CD8-positive, alpha-beta T cell (primary cell): ENCODE measurements at regions of chr14 and their contacts with region 1.

Region 1: DNA sequence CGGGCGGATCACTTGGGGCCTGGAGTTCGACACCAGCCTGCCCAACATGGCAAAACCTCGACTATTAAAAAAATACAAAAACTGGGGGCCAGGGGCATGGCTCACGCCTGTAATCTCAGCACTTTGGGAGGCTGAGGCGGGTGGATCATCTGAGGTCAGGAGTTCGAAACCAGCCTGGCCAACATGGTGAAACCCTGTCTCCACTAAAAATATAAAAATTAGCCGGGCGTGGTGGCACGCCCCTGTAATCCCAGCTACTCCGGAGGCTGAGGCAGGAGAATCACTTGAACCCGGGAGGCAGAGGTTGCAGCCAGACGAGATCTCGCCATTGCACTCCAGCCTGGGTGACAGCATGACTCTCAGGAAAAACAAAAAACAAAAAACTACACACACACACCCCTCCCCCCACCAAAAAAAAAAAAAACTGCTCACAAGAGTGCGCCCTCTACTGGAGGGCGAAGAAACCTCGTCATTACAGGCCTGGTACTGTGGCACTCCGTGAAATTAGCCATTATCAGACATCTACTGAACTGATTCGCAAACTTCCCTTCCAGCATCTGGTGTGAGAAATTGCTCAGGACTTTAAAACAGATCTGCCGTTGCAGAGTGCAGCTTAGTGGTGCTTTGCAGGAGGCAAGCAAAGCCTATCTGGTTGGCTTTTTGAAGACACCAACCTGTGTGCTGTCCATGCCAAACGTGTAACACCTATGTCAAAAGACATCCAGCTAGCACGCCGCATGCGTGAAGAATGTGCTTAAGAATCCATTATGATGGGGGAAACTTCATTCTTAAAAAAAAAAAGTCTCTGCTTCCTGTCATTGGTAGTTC is 7.7 kb downstream of the PPP1R3E start:
- DNase-seq: peak in 8 of 9 experiments; percentile 37 to 86 (median 60)
- ATAC-seq: peak; percentile 90
- H3K4me3 ChIP-seq: no peak overlapping the region
- H3K4me3 Mint-ChIP-seq: peak overlapping the region; percentile 47
- H3K27ac ChIP-seq: no peak overlapping the region
- H3K27ac Mint-ChIP-seq: peak overlapping the region; percentile 45
- H3K4me1 ChIP-seq: peaks cover 14% of the 10 kb centered on the region
- H3K4me1 Mint-ChIP-seq: peaks cover 22% of the 10 kb centered on the region
- H3K27me3 ChIP-seq: no peaks in the 10 kb centered on the region
- H3K27me3 Mint-ChIP-seq: no peaks in the 10 kb centered on the region
- CTCF ChIP-seq: peak; percentile 82

Region 2: DNA sequence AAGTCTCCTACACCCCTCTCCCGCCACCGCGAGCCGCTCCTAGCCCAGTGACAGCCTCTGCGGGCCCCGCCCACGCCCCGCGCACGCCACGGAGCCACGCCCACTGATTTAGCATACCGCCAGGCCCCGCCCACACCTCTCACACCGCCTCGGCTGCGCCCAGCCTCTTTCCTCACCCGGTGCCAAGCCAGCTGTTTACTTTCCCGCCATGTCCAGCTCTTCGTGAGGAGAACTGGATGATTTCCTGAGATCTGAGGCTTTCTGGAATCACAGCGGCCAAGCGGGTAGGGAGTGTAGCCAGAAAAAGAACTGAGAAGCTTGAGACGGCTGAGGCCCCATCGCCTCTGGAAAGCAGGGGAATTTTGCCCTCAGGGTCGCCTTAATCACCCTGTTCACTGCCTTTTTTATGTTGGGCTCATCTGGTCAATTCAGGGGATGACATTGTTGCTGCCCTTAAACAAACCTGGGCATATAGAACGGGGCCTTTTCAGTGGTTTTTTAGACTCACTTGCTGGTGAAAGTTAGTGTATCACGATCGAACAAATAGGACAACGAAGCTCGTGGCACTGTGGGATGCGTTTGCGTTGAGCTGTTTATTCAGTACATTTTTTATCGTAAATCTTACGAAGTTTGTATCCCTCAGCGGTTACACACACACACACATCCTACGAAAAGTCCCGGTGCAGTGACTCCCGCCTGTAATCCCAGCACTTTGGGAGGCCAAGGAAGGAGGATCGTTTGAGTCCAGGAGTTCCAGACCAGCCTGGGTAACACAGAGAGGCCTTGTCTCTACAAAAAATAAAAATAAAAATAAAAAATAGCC is 57.0 kb before region 1 on chr14 and contains the start of gene RNF212B:
- CTCF ChIA-PET with region 1: no interaction called
- POLR2A ChIA-PET with region 1: no interaction called
- intact Hi-C with region 1: no loop called
- DNase-seq: peak; percentile 48 to 79 (median 76)
- ATAC-seq: peak; percentile 100
- H3K4me3 ChIP-seq: peak within 1 kb of the TSS in 1 of 2 experiments; percentile 9
- H3K4me3 Mint-ChIP-seq: peak within 1 kb of the TSS; percentile 57
- H3K27ac ChIP-seq: no peak within 1 kb of the TSS
- H3K27ac Mint-ChIP-seq: no peak within 1 kb of the TSS
- H3K4me1 ChIP-seq: peaks cover 7% of the 10 kb centered on the region
- H3K4me1 Mint-ChIP-seq: peaks cover 8% of the 10 kb centered on the region
- H3K27me3 ChIP-seq: peaks cover 6 to 7% of the 10 kb centered on the region in 2 experiments
- H3K27me3 Mint-ChIP-seq: peaks cover 34% of the 10 kb centered on the region
- CTCF ChIP-seq: no peak
- total RNA-seq, gene RNF212B: not detected

Region 3: GRCh38 chr14:23269193-23269592 is 25.8 kb before region 1 on chr14:
- CTCF ChIA-PET with region 1: interaction called, 6 read pairs
- POLR2A ChIA-PET with region 1: no interaction called
- intact Hi-C with region 1: loop called (anchors 1 kb)
- DNase-seq: no peak
- ATAC-seq: no peak
- H3K4me3 ChIP-seq: no peak overlapping the region
- H3K4me3 Mint-ChIP-seq: no peak overlapping the region
- H3K27ac ChIP-seq: no peak overlapping the region
- H3K27ac Mint-ChIP-seq: no peak overlapping the region
- H3K4me1 ChIP-seq: no peaks in the 10 kb centered on the region
- H3K4me1 Mint-ChIP-seq: no peaks in the 10 kb centered on the region
- H3K27me3 ChIP-seq: peaks cover 0 to 2% of the 10 kb centered on the region in 2 experiments
- H3K27me3 Mint-ChIP-seq: peaks cover 2% of the 10 kb centered on the region
- CTCF ChIP-seq: no peak

Region 4: GRCh38 chr14:23275412-23275811 is 19.5 kb before region 1 on chr14:
- CTCF ChIA-PET with region 1: interaction called, 26 read pairs
- POLR2A ChIA-PET with region 1: interaction called, 10 read pairs
- intact Hi-C with region 1: no loop called
- DNase-seq: no peak
- ATAC-seq: no peak
- H3K4me3 ChIP-seq: no peak overlapping the region
- H3K4me3 Mint-ChIP-seq: no peak overlapping the region
- H3K27ac ChIP-seq: no peak overlapping the region
- H3K27ac Mint-ChIP-seq: no peak overlapping the region
- H3K4me1 ChIP-seq: no peaks in the 10 kb centered on the region
- H3K4me1 Mint-ChIP-seq: peaks cover 2% of the 10 kb centered on the region
- H3K27me3 ChIP-seq: no peaks in the 10 kb centered on the region
- H3K27me3 Mint-ChIP-seq: no peaks in the 10 kb centered on the region
- CTCF ChIP-seq: no peak

Region 5: DNA sequence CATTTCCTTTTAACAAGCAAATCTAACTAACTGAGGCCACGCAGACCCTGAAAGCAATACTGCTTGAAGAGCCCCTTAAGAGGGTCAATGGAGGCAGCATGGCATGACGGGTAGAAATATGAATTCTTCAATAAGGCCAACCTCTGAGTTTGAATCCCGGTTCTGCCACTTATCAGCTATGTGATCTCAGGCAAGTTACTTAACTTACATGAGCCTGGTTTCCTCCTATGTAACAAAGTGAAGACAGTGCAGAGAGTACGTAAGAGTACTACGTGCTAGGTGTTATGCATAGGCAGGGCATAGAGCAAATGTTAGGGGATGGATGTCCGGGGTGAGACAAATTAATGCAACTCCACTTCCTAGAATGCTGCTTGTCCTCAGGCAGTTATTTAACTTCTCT is 13.7 kb before region 1 on chr14:
- CTCF ChIA-PET with region 1: interaction called, 26 read pairs
- POLR2A ChIA-PET with region 1: interaction called, 10 read pairs
- intact Hi-C with region 1: loop called in 1 of 2 experiments (anchors 1 kb)
- DNase-seq: no peak
- ATAC-seq: no peak
- H3K4me3 ChIP-seq: no peak overlapping the region
- H3K4me3 Mint-ChIP-seq: no peak overlapping the region
- H3K27ac ChIP-seq: no peak overlapping the region
- H3K27ac Mint-ChIP-seq: no peak overlapping the region
- H3K4me1 ChIP-seq: peaks cover 11% of the 10 kb centered on the region
- H3K4me1 Mint-ChIP-seq: peaks cover 30% of the 10 kb centered on the region
- H3K27me3 ChIP-seq: no peaks in the 10 kb centered on the region
- H3K27me3 Mint-ChIP-seq: no peaks in the 10 kb centered on the region
- CTCF ChIP-seq: no peak

Region 6: GRCh38 chr14:23327947-23328744 is 33.2 kb after region 1 on chr14:
- CTCF ChIA-PET with region 1: interaction called, 53 read pairs
- POLR2A ChIA-PET with region 1: interaction called, 202 read pairs
- intact Hi-C with region 1: no loop called
- DNase-seq: peak in 8 of 9 experiments; percentile 43 to 82 (median 71)
- ATAC-seq: peak; percentile 82
- H3K4me3 ChIP-seq: no peak overlapping the region
- H3K4me3 Mint-ChIP-seq: no peak overlapping the region
- H3K27ac ChIP-seq: no peak overlapping the region
- H3K27ac Mint-ChIP-seq: no peak overlapping the region
- H3K4me1 ChIP-seq: peaks cover 2% of the 10 kb centered on the region
- H3K4me1 Mint-ChIP-seq: peaks cover 9% of the 10 kb centered on the region
- H3K27me3 ChIP-seq: no peaks in the 10 kb centered on the region
- H3K27me3 Mint-ChIP-seq: no peaks in the 10 kb centered on the region
- CTCF ChIP-seq: peak; percentile 87

Region 7: DNA sequence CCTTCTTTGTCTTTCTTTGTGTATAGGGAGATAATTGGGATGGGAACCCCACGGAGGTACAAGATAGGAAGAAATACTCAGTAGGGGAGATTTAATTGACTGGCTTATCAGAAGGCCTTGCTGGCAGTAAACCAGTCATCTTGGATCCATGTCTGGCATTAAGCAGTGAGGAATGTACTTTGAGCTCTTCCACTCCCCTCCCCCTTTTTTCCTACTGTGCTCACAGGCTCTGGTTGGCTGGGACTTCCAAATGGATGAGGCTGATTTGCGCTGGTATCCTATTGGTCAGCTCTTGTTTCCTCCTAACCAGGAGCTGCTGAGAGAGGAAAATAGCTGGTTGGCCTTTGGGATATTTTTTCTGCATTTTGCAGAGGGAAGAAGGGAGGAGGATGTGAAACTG is 199.3 kb after region 1 on chr14:
- CTCF ChIA-PET with region 1: no interaction called
- POLR2A ChIA-PET with region 1: no interaction called
- intact Hi-C with region 1: no loop called
- DNase-seq: no peak
- ATAC-seq: no peak
- H3K4me3 ChIP-seq: no peak overlapping the region
- H3K4me3 Mint-ChIP-seq: no peak overlapping the region
- H3K27ac ChIP-seq: no peak overlapping the region
- H3K27ac Mint-ChIP-seq: no peak overlapping the region
- H3K4me1 ChIP-seq: no peaks in the 10 kb centered on the region
- H3K4me1 Mint-ChIP-seq: no peaks in the 10 kb centered on the region
- H3K27me3 ChIP-seq: no peaks in the 10 kb centered on the region
- H3K27me3 Mint-ChIP-seq: no peaks in the 10 kb centered on the region
- CTCF ChIP-seq: no peak